Lower leg skin (tissue), 4 donors: ENCODE measurements at regions of chr1 and their contacts with region 1.

Region 1: GRCh38 chr1:55284852-55285251 is 69.7 kb upstream of the USP24 start:
- DNase-seq: peak in 1 of 2 donors; percentile 42
- H3K4me3 ChIP-seq: no peak overlapping the region
- CTCF ChIP-seq: no peak
- POLR2A ChIP-seq: no peak

Region 2: DNA sequence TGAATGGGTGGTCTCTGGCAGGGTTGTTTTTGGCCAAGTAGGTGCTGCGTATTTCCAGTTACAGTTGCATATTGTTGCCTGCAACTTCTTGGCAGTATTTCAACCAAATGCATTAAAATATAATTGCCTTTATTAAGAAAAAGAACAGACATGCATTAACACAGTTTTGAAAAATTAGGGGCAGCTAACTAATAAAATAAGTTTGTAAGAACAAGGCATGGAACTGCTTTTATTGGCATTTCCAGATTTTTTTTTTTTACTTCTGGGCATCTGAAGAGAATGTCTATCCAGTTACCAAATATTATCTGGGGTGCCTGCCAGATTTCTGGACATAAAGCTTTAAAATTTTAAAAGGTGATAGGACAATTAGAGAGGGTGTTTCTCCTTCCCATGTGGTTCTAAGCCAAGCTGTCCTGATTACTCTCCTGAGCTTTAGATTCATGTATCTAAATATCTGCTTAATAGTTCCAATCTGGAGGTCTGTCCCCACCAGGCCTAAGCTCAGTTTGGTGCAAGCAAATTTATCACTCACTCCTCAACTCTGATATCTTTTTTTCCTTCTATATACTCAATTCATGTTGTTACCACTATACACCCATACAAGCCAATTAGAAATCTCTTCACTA is 483.6 kb after region 1 on chr1:
- intact Hi-C with region 1: no loop called
- DNase-seq: no peak
- H3K4me3 ChIP-seq: no peak overlapping the region
- CTCF ChIP-seq: no peak
- POLR2A ChIP-seq: no peak

Region 3: GRCh38 chr1:56709269-56709880 is 1424.5 kb after region 1 on chr1:
- intact Hi-C with region 1: loop called (anchors 10 kb)
- DNase-seq: no peak
- H3K4me3 ChIP-seq: no peak overlapping the region
- CTCF ChIP-seq: no peak
- POLR2A ChIP-seq: no peak